CD8-positive, alpha-beta T cell (primary cell): ENCODE measurements at regions of chr11 and their contacts with region 1.

Region 1: DNA sequence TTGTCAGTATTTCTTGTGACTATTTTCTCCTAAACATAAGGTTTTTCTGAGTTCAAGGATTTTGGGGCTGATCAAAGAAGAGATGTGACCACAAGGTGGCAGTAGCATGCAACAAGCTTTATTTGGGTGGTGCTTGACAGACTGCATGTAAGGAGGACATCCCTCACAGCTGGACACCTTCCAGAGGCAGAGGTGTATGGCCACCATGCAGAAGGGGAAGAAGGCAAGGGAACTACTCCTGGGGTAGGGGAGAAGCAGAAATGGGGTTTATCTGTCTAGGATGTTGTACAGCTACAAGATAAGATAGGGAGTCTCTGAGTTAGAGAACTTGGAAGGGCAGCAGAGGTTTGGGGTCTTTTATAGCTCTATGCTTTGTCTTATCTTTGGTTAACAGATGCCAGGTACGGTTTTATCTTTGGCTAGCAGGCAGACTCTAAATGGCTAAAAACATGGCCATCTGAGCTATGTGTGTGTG is 5.1 kb upstream of the BIRC2 start:
- DNase-seq: peak; percentile 45 to 89 (median 77)
- ATAC-seq: peak; percentile 22
- H3K4me3 ChIP-seq: no peak overlapping the region
- H3K4me3 Mint-ChIP-seq: no peak overlapping the region
- H3K27ac ChIP-seq: no peak overlapping the region
- H3K27ac Mint-ChIP-seq: peak overlapping the region; percentile 29
- H3K4me1 ChIP-seq: peaks cover 12% of the 10 kb centered on the region
- H3K4me1 Mint-ChIP-seq: peaks cover 17% of the 10 kb centered on the region
- H3K27me3 ChIP-seq: no peaks in the 10 kb centered on the region
- H3K27me3 Mint-ChIP-seq: no peaks in the 10 kb centered on the region
- CTCF ChIP-seq: peak; percentile 74

Region 2: DNA sequence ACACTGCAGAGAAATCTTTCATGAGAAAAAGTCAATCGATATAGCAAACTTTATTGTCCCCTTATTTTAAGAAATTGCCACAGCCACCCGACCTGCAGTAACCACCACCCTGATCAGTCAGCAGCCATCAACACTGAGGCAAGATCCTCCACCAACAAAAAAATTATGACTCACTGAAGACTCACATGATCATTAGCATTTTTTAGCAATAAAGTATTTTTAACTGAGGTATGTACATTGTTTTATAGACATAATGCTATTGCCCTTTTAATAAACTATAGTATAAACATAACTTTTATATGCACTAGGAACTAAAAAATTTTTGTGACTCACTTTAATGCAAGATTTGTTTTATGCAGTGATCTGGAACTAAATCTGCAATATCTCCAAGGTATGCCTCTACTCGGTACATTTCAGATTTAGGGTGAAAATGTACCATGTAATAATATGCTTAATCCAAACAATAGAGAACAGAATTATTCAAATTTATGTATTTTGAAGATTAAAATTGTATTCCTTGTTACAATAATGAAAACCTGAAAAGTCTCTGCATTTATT is 506.3 kb before region 1 on chr11:
- CTCF ChIA-PET with region 1: no interaction called
- POLR2A ChIA-PET with region 1: no interaction called
- intact Hi-C with region 1: no loop called
- DNase-seq: no peak
- ATAC-seq: no peak
- H3K4me3 ChIP-seq: no peak overlapping the region
- H3K4me3 Mint-ChIP-seq: no peak overlapping the region
- H3K27ac ChIP-seq: no peak overlapping the region
- H3K27ac Mint-ChIP-seq: no peak overlapping the region
- H3K4me1 ChIP-seq: no peaks in the 10 kb centered on the region
- H3K4me1 Mint-ChIP-seq: no peaks in the 10 kb centered on the region
- H3K27me3 ChIP-seq: no peaks in the 10 kb centered on the region
- H3K27me3 Mint-ChIP-seq: no peaks in the 10 kb centered on the region
- CTCF ChIP-seq: no peak

Region 3: GRCh38 chr11:102361086-102362031 is 19.5 kb after region 1 on chr11:
- CTCF ChIA-PET with region 1: interaction called, 20 read pairs
- POLR2A ChIA-PET with region 1: interaction called, 3 read pairs
- intact Hi-C with region 1: loop called (anchors 1 kb)
- DNase-seq: peak; percentile 9 to 85 (median 59)
- ATAC-seq: peak; percentile 77
- H3K4me3 ChIP-seq: peak overlapping the region in 1 of 2 experiments; percentile 26
- H3K4me3 Mint-ChIP-seq: peak overlapping the region; percentile 58
- H3K27ac ChIP-seq: peak overlapping the region; percentile 54 to 80
- H3K27ac Mint-ChIP-seq: peak overlapping the region; percentile 96
- H3K4me1 ChIP-seq: peaks cover 45% of the 10 kb centered on the region
- H3K4me1 Mint-ChIP-seq: peaks cover 64% of the 10 kb centered on the region
- H3K27me3 ChIP-seq: no peaks in the 10 kb centered on the region
- H3K27me3 Mint-ChIP-seq: no peaks in the 10 kb centered on the region
- CTCF ChIP-seq: no peak

Region 4: DNA sequence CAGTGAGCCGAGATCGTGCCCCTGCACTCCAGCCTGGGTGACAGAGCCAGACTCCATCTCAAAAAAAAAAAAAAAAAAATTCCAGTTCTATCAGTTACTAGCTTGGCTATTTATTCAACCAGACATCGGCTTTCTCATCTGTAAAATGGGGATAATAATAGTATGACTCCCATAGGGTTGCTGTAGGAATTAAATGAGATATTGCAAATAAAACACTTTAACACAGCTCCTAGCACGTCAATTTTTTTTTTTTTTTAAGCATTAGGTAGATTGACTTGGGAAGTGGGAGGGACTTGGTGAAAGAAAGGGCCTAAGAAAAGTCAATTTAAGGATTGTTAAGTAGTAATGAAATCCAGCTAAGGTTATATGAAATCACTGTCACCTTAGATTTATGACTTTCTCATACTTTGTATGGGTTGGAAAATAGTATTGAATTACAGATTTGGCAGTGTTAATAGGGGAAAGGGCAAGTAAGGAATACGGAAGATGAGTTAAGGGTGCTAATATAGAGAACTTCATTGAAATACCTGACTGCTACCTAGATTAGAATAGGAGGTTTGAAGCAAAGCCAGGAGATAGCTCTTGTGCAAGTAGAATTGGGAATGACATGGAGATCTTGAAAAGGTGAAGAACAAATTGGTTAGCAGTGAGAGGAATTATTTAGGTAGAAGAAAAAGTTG is 34.0 kb after region 1 on chr11:
- CTCF ChIA-PET with region 1: interaction called, 9 read pairs
- POLR2A ChIA-PET with region 1: no interaction called
- intact Hi-C with region 1: loop called (anchors 5 kb)
- DNase-seq: no peak
- ATAC-seq: no peak
- H3K4me3 ChIP-seq: no peak overlapping the region
- H3K4me3 Mint-ChIP-seq: no peak overlapping the region
- H3K27ac ChIP-seq: no peak overlapping the region
- H3K27ac Mint-ChIP-seq: peak overlapping the region; percentile 28
- H3K4me1 ChIP-seq: peaks cover 8% of the 10 kb centered on the region
- H3K4me1 Mint-ChIP-seq: peaks cover 33% of the 10 kb centered on the region
- H3K27me3 ChIP-seq: no peaks in the 10 kb centered on the region
- H3K27me3 Mint-ChIP-seq: no peaks in the 10 kb centered on the region
- CTCF ChIP-seq: no peak

Region 5: GRCh38 chr11:102495161-102496042 is 153.5 kb after region 1 on chr11:
- CTCF ChIA-PET with region 1: interaction called, 40 read pairs
- POLR2A ChIA-PET with region 1: no interaction called
- intact Hi-C with region 1: loop called (anchors 1 kb)
- DNase-seq: peak in 7 of 9 experiments; percentile 24 to 89 (median 39)
- ATAC-seq: peak; percentile 94
- H3K4me3 ChIP-seq: no peak overlapping the region
- H3K4me3 Mint-ChIP-seq: peak overlapping the region; percentile 43
- H3K27ac ChIP-seq: no peak overlapping the region
- H3K27ac Mint-ChIP-seq: peak overlapping the region; percentile 16
- H3K4me1 ChIP-seq: peaks cover 4% of the 10 kb centered on the region
- H3K4me1 Mint-ChIP-seq: peaks cover 14% of the 10 kb centered on the region
- H3K27me3 ChIP-seq: peaks cover 0 to 4% of the 10 kb centered on the region in 2 experiments
- H3K27me3 Mint-ChIP-seq: peaks cover 3% of the 10 kb centered on the region
- CTCF ChIP-seq: peak; percentile 87

Region 6: GRCh38 chr11:102666331-102666957 is 324.6 kb after region 1 on chr11:
- CTCF ChIA-PET with region 1: interaction called, 33 read pairs
- POLR2A ChIA-PET with region 1: interaction called, 3 read pairs
- intact Hi-C with region 1: loop called (anchors 1 to 2 kb)
- DNase-seq: peak in 4 of 9 experiments; percentile 13 to 54 (median 26)
- ATAC-seq: no peak
- H3K4me3 ChIP-seq: no peak overlapping the region
- H3K4me3 Mint-ChIP-seq: no peak overlapping the region
- H3K27ac ChIP-seq: no peak overlapping the region
- H3K27ac Mint-ChIP-seq: no peak overlapping the region
- H3K4me1 ChIP-seq: no peaks in the 10 kb centered on the region
- H3K4me1 Mint-ChIP-seq: no peaks in the 10 kb centered on the region
- H3K27me3 ChIP-seq: no peaks in the 10 kb centered on the region
- H3K27me3 Mint-ChIP-seq: peaks cover 4% of the 10 kb centered on the region
- CTCF ChIP-seq: peak; percentile 65